ENCODE measurements at regions of chr11 and their contacts with region 1.

Region 1: GRCh38 chr11:31958076-31958735 is 132.7 kb upstream of the RCN1 start:
- DNase-seq: peak; percentile 70 to 73 (median 72)
- ATAC-seq: peak; percentile 98
- H3K4me3 ChIP-seq: no peak overlapping the region
- H3K27ac ChIP-seq: no peak overlapping the region
- H3K4me1 ChIP-seq: no peaks in the 10 kb centered on the region; a peak in 1 of 5 replicates
- H3K27me3 ChIP-seq: peaks cover 0 to 3% of the 10 kb centered on the region in 2 experiments; a peak in 3 of 5 replicates
- CTCF ChIP-seq: peak; percentile 78 to 90 (median 81)
- EP300 ChIP-seq: no peak
- POLR2A ChIP-seq: no peak
- RAD21 ChIP-seq: peak; percentile 61 to 83

Region 2: DNA sequence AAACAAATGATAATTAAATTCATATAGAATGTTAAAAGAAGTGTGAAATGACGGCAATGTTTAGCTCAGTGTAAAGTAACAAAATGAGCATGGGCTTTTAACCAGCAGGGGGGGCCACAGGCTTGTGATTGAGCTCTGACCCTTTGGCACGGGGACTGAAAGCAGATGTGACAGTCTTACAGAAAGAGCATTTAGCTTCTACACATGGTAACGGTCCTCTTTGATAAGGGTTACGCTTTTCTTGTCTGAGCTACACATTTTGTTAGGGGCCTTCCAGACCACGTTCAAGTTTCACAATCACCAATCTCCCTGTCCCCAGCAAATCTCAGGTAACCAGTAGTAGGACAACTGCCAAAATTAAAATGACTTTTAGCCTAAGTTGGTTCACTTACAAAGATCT is 851.1 kb before region 1 on chr11:
- CTCF ChIA-PET with region 1: no interaction called
- POLR2A ChIA-PET with region 1: no interaction called
- in situ Hi-C with region 1: no loop called
- intact Hi-C with region 1: loop called (anchors 1 kb)
- DNase-seq: peak; percentile 39 to 58 (median 46)
- ATAC-seq: peak; percentile 76
- H3K4me3 ChIP-seq: no peak overlapping the region
- H3K27ac ChIP-seq: no peak overlapping the region
- H3K4me1 ChIP-seq: no peaks in the 10 kb centered on the region
- H3K27me3 ChIP-seq: no peaks in the 10 kb centered on the region
- CTCF ChIP-seq: peak; percentile 39 to 63 (median 55); a peak in 5 of 6 replicates
- EP300 ChIP-seq: no peak
- POLR2A ChIP-seq: no peak
- RAD21 ChIP-seq: peak; percentile 68 to 77

Region 3: DNA sequence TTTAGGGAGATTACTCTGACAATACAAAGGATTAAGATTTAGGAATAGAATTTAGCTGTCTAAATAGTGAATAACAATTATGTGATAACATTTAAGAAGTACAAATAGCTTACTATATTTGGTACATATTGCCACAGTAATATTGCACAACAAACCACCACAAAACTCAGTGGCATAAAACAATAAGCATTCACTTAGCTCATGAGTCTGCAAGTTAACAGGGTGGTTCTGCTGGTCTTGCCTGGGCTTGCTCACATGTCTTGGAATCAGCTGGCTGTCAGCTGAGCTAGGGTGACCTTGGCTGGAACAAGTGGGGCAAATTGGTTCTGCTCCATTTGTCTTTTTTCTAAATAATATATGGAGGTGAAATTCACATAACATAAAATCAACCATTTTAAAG is 703.8 kb before region 1 on chr11:
- CTCF ChIA-PET with region 1: no interaction called
- POLR2A ChIA-PET with region 1: no interaction called
- in situ Hi-C with region 1: loop called (anchors 10 kb)
- intact Hi-C with region 1: no loop called
- DNase-seq: no peak
- ATAC-seq: no peak
- H3K4me3 ChIP-seq: no peak overlapping the region
- H3K27ac ChIP-seq: no peak overlapping the region
- H3K4me1 ChIP-seq: no peaks in the 10 kb centered on the region
- H3K27me3 ChIP-seq: no peaks in the 10 kb centered on the region
- CTCF ChIP-seq: no peak
- EP300 ChIP-seq: no peak
- POLR2A ChIP-seq: no peak
- RAD21 ChIP-seq: no peak

Region 4: GRCh38 chr11:31487848-31488247 is 470.4 kb before region 1 on chr11:
- CTCF ChIA-PET with region 1: no interaction called
- POLR2A ChIA-PET with region 1: no interaction called
- in situ Hi-C with region 1: no loop called
- intact Hi-C with region 1: loop called (anchors 10 kb)
- DNase-seq: peak in 2 of 4 experiments; percentile 12 to 43
- ATAC-seq: peak; percentile 67
- H3K4me3 ChIP-seq: no peak overlapping the region
- H3K27ac ChIP-seq: no peak overlapping the region
- H3K4me1 ChIP-seq: no peaks in the 10 kb centered on the region; a peak in 1 of 5 replicates
- H3K27me3 ChIP-seq: no peaks in the 10 kb centered on the region
- CTCF ChIP-seq: peak in 2 of 3 experiments; percentile 34 to 38; a peak in 4 of 6 replicates
- EP300 ChIP-seq: no peak
- POLR2A ChIP-seq: no peak
- RAD21 ChIP-seq: no peak; a peak in 1 of 4 replicates